Activated CD4-positive, alpha-beta T cell treated with anti-CD3 and anti-CD28 coated beads for 36 hours (primary cell): ENCODE measurements at regions of chr1 and their contacts with region 1.

Region 1: DNA sequence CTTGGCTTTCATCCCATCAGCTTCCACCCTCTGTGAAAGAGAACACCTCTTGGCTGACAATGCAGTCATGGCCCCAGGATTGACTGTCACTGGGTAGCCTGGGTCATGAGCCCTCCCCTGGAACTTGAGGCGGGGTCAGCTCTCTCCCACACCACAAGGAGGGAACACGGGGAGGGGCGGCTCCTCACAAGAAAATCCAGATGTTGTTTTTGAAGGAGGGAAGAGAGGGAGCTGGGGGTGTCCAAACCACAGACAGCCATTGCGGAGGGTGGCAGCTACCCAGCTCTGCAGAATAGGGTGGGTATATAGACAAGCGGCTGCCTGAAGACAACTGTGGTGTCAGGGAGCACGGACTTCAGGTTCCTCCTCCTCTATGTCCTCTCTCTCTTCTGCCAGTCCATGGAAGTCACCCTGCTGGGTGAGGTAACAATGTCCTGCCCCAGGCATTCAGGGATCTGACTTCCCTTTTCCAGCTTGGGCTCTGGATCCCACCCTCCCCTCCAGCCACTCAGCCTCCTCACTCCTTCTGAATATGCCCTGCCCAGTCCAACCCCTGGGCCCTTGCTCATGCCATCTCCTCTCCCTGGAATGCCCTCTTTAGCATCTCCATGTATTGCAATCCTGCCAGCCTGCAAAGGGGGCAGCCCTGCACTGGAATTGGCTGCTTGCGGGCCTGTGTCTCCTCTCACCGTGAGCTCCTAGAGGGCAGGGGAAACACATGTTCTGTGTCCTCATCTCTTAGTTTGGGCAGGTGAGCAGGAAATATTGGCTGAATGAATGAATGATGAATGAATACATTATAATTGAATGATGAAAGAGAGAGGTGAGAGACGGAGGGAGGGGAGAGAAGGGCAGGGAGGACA is 60.9 kb upstream of the RUNX3 start:
- DNase-seq: peak; percentile 48
- ATAC-seq: peak; percentile 34
- H3K4me3 Mint-ChIP-seq: peak overlapping the region; percentile 50
- H3K27ac Mint-ChIP-seq: peak overlapping the region; percentile 100
- H3K4me1 Mint-ChIP-seq: peaks cover 86% of the 10 kb centered on the region
- H3K27me3 Mint-ChIP-seq: no peaks in the 10 kb centered on the region

Region 2: DNA sequence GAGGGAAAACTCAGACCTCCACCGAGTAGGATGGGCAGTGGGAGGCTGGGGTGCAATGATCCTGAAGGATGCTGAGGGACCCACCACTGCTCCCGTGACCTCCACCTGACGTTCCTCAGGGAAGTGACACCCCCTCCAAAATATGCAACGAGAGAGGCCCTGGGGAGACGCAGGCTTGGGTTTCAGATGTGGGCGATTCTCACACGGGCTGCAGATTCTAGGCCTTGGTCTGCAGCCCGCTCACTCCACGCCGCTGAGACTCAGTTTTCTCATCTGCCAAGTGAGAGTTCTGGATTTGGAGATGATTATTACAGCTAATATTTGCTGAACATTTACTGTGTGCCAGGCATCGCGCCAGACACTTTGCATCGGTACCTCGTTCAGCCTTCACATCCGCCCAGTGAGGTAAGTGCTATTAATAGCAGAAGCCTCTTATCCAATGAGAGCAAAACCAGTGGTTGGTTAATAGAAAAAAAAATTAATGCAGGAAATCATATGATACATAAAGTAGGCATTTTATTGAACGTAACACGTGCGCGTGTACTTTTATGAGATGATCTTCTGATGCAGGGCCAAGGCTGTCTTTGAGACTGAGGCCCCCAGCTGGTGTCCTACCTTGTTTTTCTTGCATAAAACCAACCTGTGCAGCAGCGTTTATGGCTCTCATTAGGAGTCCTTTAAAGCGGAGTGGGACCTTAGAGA is 41.1 kb after region 1 on chr1:
- CTCF ChIA-PET with region 1: interaction called, 16 read pairs
- POLR2A ChIA-PET with region 1: no interaction called
- intact Hi-C with region 1: loop called in 1 of 2 experiments (anchors 2 kb)
- DNase-seq: peak; percentile 70
- ATAC-seq: peak; percentile 25
- H3K4me3 Mint-ChIP-seq: no peak overlapping the region
- H3K27ac Mint-ChIP-seq: no peak overlapping the region
- H3K4me1 Mint-ChIP-seq: peaks cover 74% of the 10 kb centered on the region
- H3K27me3 Mint-ChIP-seq: no peaks in the 10 kb centered on the region